CD4-positive, alpha-beta T cell (primary cell): ENCODE measurements at regions of chr16 and their contacts with region 1.

Region 1: DNA sequence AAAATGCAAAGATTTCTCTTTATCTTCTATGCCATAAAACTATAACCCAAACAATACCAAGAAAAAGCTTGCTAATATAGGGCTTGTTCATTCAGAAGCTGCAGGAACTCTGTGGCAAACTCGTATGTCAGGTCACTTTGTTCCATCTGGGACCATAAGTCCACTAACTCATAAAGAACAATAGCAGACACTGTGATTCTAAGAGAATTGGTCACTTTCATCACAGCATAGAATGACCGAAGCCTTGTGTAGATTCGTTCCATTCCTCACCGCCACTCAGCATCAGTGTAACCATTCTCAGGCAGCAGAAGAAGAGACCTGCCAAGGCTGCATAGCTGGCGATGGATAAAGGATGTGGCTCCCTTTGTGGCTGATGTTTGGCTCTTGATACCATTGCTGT is 30.3 kb upstream of the VAT1L start:
- DNase-seq: no peak
- ATAC-seq: no peak
- H3K4me3 ChIP-seq: no peak overlapping the region
- H3K4me3 Mint-ChIP-seq: no peak overlapping the region
- H3K27ac ChIP-seq: no peak overlapping the region
- H3K27ac Mint-ChIP-seq: no peak overlapping the region
- H3K4me1 ChIP-seq: no peaks in the 10 kb centered on the region
- H3K4me1 Mint-ChIP-seq: no peaks in the 10 kb centered on the region
- H3K27me3 ChIP-seq: peaks cover 0 to 6% of the 10 kb centered on the region in 2 experiments
- H3K27me3 Mint-ChIP-seq: peaks cover 10% of the 10 kb centered on the region
- CTCF ChIP-seq: no peak

Region 2: DNA sequence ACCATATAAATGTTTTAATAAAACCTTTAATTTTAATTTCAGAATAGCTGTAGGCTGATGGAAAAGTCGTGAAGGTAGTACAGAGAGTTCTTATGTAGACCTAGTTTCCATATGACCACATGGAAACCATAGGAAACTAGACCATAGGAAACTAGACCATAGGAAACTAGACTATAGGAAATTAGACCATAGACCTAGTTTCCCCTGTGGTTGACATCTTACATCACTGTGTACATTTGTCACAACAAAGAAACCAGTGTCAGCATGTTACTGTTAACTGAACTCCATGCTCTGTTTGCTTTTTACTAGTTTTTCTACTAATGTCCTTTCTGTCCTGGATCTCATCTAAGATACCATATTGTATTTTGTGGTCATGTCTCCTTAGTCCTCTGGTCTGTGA is 21.2 kb before region 1 on chr16:
- CTCF ChIA-PET with region 1: no interaction called
- POLR2A ChIA-PET with region 1: no interaction called
- intact Hi-C with region 1: loop called in 1 of 2 experiments (anchors 1 kb)
- DNase-seq: no peak
- ATAC-seq: no peak
- H3K4me3 ChIP-seq: no peak overlapping the region
- H3K4me3 Mint-ChIP-seq: no peak overlapping the region
- H3K27ac ChIP-seq: no peak overlapping the region
- H3K27ac Mint-ChIP-seq: no peak overlapping the region
- H3K4me1 ChIP-seq: no peaks in the 10 kb centered on the region
- H3K4me1 Mint-ChIP-seq: no peaks in the 10 kb centered on the region
- H3K27me3 ChIP-seq: no peaks in the 10 kb centered on the region
- H3K27me3 Mint-ChIP-seq: no peaks in the 10 kb centered on the region
- CTCF ChIP-seq: no peak